ENCODE measurements at regions of chr10 and their contacts with region 1.

Region 1: DNA sequence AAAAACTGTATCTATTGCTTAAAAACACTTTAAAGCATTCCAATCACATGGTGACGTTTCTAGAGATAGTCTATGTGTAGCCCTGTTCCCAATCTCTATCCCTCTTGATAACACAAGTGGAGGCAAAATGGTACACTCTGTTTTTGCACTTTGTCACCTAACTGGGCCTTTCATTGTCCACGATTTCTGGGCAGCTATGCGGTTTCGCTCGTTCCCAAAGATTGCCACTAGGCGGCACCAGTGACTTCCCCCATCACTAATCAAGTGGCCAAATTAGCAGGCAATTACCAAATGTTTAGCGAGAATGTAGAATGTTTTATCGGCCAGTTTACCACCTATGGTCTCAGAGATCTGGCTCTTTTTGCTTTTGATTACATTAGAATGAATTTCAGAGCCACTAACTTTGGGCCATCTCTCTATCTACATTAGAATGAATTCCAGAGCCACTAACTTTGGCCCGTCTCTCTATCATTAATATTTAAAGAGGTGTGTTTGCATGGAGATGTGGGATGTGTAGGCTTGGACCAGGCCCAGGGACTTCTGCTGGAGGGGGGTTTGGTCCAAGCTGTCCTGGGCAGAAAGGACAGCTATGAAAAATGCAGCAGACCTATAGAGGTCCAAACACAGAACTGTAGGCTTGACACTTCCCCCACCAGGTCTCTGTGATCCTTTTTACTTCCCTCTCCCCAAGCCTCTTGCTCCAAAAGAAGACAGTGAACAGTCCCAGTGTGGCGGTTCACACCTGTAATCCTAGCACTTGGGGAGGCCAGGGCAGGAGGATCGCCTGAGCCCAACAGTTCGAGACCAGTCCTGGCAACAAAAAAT is 90.1 kb downstream of the EPC1 start:
- DNase-seq: peak; percentile 54
- H3K4me3 ChIP-seq: no peak overlapping the region
- H3K27ac ChIP-seq: no peak overlapping the region
- H3K4me1 ChIP-seq: no peaks in the 10 kb centered on the region
- H3K27me3 ChIP-seq: no peaks in the 10 kb centered on the region
- CTCF ChIP-seq: peak; percentile 74 to 89 (median 82)
- POLR2A ChIP-seq: no peak

Region 2: DNA sequence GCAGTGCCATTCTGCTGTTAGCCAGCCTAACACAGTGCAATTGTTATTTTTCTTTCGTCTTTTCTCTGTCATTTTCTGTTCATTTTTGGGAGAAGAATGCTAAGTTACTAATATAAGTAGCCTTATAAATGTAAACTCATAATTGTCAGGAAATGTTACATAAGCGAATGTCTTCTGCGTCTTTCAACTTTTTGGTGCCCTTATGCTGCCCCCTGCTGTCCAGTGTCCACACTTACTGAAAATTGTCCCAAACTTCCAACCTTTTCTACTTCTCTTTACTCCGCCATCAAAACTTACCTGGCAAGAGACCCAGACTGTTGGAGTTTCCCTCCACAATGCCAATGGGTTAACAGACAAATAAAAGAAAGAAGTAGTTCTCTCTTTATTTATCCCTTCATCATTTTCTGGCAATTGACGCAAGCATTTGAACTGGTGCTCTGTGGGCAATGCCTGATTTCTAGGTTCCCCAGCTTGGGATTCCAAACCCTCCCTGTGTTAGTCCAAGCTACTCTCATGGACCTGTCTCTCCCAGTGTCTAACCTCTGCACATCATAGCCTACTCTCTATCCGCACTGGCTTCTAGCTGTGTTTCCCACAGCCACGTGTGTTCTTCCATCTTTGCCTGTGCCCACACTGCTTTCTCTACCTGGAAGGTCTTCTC is 111.1 kb after region 1 on chr10:
- intact Hi-C with region 1: loop called (anchors 5 kb)
- DNase-seq: peak; percentile 71
- H3K4me3 ChIP-seq: no peak overlapping the region
- H3K27ac ChIP-seq: no peak overlapping the region
- H3K4me1 ChIP-seq: no peaks in the 10 kb centered on the region
- H3K27me3 ChIP-seq: no peaks in the 10 kb centered on the region
- CTCF ChIP-seq: peak; percentile 74 to 87 (median 80)
- POLR2A ChIP-seq: no peak

Region 3: GRCh38 chr10:32445740-32446535 is 189.1 kb after region 1 on chr10 and contains the start of gene CCDC7:
- intact Hi-C with region 1: loop called (anchors 5 kb)
- DNase-seq: peak; percentile 69
- H3K4me3 ChIP-seq: peak within 1 kb of the TSS; percentile 42 to 49
- H3K27ac ChIP-seq: peak within 1 kb of the TSS; percentile 92 to 95
- H3K4me1 ChIP-seq: no peaks in the 10 kb centered on the region
- H3K27me3 ChIP-seq: no peaks in the 10 kb centered on the region
- CTCF ChIP-seq: peak in 3 of 4 experiments; percentile 35 to 49 (median 48)
- POLR2A ChIP-seq: no peak
- total RNA-seq, gene CCDC7: 12.9 to 19.8 TPM